Dorsolateral prefrontal cortex (tissue), 120 donors: ENCODE measurements at regions of chr5 and their contacts with region 1.

Region 1: GRCh38 chr5:134904630-134905245 is at the start of gene PCBD2:
- DNase-seq: peak; percentile 76 to 92 (median 84)
- H3K4me3 ChIP-seq: peak within 1 kb of the TSS; percentile 44 to 94 (median 82)
- H3K27ac ChIP-seq: peak within 1 kb of the TSS; percentile 79 to 99 (median 96)
- H3K27me3 ChIP-seq: no peaks in the 10 kb centered on the region
- CTCF ChIP-seq: peak; percentile 43 to 94 (median 80)
- total RNA-seq, gene PCBD2: 5.3 to 19.3 (median 9.8) TPM

Region 2: GRCh38 chr5:134758504-134759341 is 146.0 kb before region 1 on chr5 and contains the start of gene DDX46:
- intact Hi-C with region 1: loop called in 1 of 2 experiments (anchors 5 kb)
- DNase-seq: peak; percentile 81 to 96 (median 91)
- H3K4me3 ChIP-seq: peak within 1 kb of the TSS; percentile 68 to 99 (median 90)
- H3K27ac ChIP-seq: peak within 1 kb of the TSS in 51 of 59 donors; percentile 10 to 86 (median 70)
- H3K27me3 ChIP-seq: no peaks in the 10 kb centered on the region
- CTCF ChIP-seq: peak; percentile 77 to 97 (median 89)
- total RNA-seq, gene DDX46: 39.7 to 84.6 (median 56.9) TPM

Region 3: DNA sequence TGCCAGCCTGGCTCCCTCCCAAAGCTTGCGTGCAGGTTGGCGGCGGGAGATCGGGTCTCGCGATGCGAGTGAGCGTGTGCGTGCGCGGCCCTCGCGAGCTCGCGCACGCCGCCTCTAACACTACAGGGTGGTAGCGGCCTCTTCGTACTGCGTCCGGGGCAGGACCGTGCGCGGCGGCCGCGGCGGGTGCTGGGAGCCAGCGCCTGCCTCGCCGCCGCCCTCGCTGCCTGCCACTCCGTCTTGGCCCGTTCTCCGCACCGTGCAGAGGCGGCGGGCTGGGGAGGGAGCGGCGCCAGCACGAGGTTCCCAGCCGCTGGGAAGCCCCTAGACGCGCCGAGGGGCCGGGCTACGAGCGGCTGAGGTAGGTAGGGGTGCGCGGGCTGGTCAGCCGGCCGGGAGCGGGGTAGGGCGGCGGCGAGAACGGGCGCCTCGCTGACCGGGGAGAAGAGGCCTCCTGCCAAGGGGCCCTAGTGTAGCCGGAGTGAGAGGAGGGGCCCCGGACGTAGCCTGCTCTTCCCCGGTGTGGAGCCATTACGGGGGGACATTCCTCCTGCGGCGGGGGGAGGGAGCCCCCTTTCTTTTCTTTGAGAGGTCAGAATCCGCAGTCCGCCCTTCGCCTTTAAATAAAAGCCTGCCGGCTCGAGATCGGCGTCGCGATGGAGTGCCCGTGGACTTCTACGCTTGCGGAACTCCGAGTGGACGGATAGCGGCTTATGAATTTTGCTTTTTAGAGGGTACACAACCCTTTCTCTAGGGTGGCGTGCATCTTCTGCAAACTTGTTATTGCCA is 58.7 kb before region 1 on chr5 and contains the start of gene C5orf24:
- intact Hi-C with region 1: loop called (anchors 2 kb)
- DNase-seq: peak; percentile 89 to 96 (median 94)
- H3K4me3 ChIP-seq: peak within 1 kb of the TSS; percentile 61 to 99 (median 92)
- H3K27ac ChIP-seq: peak within 1 kb of the TSS; percentile 74 to 98 (median 95)
- H3K27me3 ChIP-seq: no peaks in the 10 kb centered on the region
- CTCF ChIP-seq: peak in 38 of 56 donors; percentile 11 to 64 (median 33)
- total RNA-seq, gene C5orf24: 38.2 to 79.3 (median 56.7) TPM

Region 4: DNA sequence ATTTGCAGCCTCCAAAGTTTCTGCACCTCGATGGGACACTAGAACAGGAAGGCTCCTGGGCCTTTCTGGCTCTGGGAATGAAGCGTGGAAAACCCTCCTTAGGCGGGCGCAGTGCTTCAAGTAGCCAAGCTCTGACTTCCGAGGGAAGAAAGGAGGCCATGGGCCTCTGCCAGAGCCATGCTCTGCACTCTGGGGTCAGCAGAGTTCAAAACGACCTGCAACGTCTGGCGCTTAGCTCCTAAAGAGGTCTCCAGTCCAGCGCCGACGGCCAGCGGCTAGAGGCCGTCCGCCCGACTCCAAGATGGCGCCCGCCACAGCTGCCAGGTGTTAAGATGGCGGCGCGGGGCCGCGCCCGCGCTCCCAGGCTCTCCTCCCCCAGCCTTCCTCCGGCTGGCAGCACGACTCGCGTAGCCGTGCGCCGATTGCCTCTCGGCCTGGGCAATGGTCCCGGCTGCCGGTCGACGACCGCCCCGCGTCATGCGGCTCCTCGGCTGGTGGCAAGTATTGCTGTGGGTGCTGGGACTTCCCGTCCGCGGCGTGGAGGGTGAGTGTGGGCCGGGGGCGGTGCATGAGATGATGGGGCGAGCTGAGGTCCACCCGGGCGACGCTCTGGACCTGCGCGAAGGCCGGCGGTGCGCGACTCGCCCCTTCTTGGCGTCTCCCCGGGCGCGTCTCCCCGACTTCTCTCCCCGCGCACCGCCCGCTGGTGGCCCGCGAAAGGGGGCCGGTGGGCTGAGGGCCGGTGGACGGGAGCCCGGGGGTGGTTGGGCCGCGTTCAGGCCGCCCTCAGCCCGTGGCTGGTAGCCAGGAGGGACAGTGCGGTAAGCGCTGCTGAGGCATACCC is 30.5 kb before region 1 on chr5 and contains the start of gene TXNDC15:
- intact Hi-C with region 1: loop called (anchors 1 kb)
- DNase-seq: peak; percentile 73 to 93 (median 82)
- H3K4me3 ChIP-seq: peak within 1 kb of the TSS; percentile 58 to 98 (median 92)
- H3K27ac ChIP-seq: peak within 1 kb of the TSS; percentile 87 to 100 (median 99)
- H3K27me3 ChIP-seq: no peaks in the 10 kb centered on the region
- CTCF ChIP-seq: peak in 31 of 56 donors; percentile 8 to 52 (median 27)
- total RNA-seq, gene TXNDC15: 37.3 to 84.2 (median 60.4) TPM

Region 5: DNA sequence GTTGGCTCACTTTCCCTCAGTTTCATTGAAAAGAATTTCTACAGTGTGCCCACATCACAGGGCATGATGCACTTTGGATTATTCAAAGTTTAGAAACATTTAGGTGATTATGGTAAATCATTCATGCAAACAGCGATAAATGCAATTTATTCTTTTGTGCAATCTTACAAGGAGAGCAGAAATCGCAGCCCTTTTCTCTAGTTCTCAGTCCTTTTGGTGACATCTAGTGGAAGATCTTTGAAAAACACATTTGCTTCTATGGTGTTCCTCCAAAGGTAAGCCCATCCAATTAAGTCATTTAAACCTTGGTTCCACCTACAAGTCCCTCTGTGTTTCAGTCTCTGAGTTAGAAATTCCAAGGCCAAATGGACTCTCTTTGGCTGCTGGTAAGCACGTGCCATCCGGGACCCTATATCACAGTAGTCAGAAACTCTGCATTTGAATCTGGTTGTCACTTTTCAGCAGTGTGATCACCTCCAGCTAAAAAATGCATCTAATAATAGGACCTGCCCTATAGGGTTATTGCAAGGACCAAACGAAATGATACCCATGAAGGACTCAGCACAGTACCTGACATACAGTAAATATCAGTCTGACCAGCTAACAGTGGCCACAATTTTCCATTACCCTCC is 427.9 kb after region 1 on chr5:
- intact Hi-C with region 1: loop called in 1 of 2 experiments (anchors 10 kb)
- DNase-seq: no peak
- H3K4me3 ChIP-seq: no peak overlapping the region
- H3K27ac ChIP-seq: no peak overlapping the region
- H3K27me3 ChIP-seq: no peaks in the 10 kb centered on the region
- CTCF ChIP-seq: peak; percentile 19 to 73 (median 56)